ENCODE measurements at regions of chr15 and their contacts with region 1.

Region 1: DNA sequence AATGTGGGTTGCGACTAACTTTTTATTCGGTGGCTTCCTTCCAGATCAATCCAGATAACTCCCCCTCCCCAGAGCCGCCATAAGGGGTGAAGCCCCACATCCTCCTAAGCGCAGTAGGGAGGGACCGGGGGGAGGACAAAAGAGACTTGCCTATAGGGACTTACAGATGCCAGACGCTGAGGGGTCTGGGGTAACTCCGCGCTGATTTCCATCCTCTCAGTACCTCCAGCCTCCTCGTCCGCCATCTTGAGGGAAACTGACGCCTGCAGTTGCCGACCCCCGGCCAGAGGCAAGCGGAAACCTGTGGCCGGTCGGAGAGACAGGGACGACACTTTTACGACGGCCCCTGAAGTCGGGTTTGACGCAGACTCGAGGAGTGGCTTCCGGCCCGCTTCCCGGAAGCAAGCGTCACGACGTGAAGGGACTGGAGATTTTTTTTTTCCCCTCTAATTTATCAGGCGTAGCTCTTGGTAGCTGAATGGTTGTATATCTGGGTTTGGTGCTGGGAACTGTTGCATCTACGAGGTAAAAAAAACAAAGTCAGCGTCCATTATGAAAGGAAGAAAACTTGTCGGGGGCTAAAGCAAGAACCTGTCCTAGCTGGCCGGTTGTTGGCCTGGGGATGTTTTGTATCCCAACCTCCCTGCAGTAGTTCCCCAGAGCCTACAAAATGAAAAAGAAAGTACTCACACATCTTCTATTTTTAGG is at the start of gene UBR1:
- DNase-seq: peak; percentile 92 to 95
- ATAC-seq: peak; percentile 91 to 94 (median 92)
- H3K4me3 ChIP-seq: peak within 1 kb of the TSS; percentile 93
- H3K27ac ChIP-seq: peak within 1 kb of the TSS; percentile 94
- H3K4me1 ChIP-seq: peaks cover 37% of the 10 kb centered on the region
- H3K27me3 ChIP-seq: no peaks in the 10 kb centered on the region
- CTCF ChIP-seq: no peak
- total RNA-seq, gene UBR1: 20.4 to 25.1 (median 22.9) TPM

Region 2: DNA sequence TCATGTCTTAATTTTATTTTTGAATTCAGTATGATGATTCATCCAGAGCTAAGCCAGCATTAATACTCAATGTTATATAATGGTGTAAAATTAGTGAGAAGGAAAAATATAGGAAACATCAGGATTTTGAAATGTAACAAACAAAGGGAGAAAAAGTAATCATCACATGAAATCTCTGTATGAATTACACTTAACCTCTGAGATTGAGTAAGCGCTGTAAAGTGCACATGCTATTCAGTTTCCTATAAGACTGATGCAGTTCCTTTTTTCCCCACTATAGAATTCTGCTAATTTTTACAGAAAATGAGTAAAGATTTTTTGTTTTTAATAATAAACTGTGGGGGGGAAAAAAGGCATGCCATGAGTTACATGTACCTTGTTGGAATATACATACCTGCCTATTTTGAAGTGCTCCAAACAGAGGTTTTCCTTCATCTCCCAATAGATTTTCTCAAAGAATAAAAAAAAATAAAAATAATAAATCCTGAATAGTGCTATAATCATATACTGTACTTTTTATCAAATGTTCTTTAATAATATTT is 121.4 kb before region 1 on chr15:
- intact Hi-C with region 1: no loop called
- DNase-seq: no peak
- ATAC-seq: no peak
- H3K4me3 ChIP-seq: no peak overlapping the region
- H3K27ac ChIP-seq: no peak overlapping the region
- H3K4me1 ChIP-seq: no peaks in the 10 kb centered on the region
- H3K27me3 ChIP-seq: no peaks in the 10 kb centered on the region
- CTCF ChIP-seq: no peak

Region 3: DNA sequence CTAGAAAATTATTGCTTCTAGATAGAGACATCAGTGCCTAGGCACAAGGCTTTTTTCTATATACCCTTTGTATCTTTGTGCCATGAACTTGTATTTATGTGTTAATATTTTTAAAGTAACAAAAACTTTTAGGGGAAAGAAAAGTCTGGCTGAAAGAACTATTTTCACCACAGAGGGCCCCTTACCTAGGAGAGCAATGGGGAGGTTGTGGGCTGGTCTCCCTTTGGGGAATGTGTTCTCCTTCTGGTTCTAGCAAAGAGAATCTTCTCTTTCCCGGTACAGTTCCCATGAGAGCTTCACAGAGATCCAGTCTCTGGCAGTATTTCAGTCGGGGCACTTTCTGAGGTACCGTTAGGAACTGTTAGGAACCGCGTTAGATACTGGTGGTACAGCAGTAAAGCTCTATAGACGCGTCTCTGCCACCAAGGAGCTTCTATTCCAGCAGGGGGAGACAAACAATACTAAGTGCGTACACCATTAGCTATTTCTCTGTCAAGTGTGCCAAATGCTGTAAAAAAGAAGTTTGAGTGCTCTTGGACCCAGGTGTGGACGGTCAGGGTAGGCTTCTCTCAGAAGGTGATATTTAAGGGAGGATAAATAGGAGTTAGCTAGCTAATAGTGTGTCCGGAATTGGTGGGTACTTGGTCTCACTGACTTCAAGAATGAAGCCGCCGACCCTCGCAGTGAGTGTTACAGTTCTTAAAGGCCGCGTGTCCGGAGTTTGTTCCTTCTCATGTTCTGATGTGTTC is 119.4 kb after region 1 on chr15:
- intact Hi-C with region 1: no loop called
- DNase-seq: no peak
- ATAC-seq: peak; percentile 88 to 98 (median 92)
- H3K4me3 ChIP-seq: no peak overlapping the region
- H3K27ac ChIP-seq: no peak overlapping the region
- H3K4me1 ChIP-seq: peaks cover 4% of the 10 kb centered on the region
- H3K27me3 ChIP-seq: no peaks in the 10 kb centered on the region
- CTCF ChIP-seq: peak; percentile 87

Region 4: GRCh38 chr15:43329960-43330779 is 224.2 kb after region 1 on chr15 and contains the start of gene LCMT2:
- intact Hi-C with region 1: loop called in 1 of 2 experiments (anchors 10 kb)
- DNase-seq: peak; percentile 93 to 97
- ATAC-seq: peak; percentile 95 to 97 (median 96)
- H3K4me3 ChIP-seq: peak within 1 kb of the TSS; percentile 89
- H3K27ac ChIP-seq: peak within 1 kb of the TSS; percentile 97
- H3K4me1 ChIP-seq: peaks cover 39% of the 10 kb centered on the region
- H3K27me3 ChIP-seq: no peaks in the 10 kb centered on the region
- CTCF ChIP-seq: no peak
- total RNA-seq, gene LCMT2: 4.1 to 6.8 (median 5.8) TPM

Measured in psoas muscle (tissue), 8 donors.